Calu3 (cell line): ENCODE measurements at regions of chr3 and their contacts with region 1.

Region 1: DNA sequence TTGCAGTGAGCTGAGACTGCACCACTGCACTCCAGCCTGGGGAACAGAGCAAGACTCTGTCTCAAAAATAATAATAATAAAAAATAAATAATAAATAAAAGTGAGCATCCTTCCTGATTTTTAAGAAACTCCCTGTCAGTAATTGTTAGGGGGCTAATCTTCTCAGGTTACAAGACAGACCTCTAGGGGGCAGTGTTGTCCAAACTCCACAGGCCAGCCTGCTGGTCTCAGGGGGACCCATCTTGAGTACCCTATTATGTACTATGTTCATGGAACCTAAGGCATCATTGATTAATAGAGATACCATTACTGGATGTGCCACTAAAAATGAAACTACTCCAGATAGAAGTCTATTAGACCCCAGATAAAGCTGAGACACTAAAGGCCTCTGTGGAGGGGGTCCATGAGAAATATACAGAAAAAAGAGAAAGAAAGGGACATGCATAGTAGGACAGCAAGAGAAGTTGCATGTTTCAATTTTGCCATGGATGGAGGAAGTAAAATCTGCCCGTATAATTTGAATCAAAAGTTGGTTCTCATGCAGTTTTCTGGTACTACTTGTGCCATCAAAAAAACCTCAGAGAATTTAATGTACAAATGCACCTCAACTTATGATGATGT is 85.5 kb upstream of the CDV3 start:
- DNase-seq: peak; percentile 62
- H3K4me3 Mint-ChIP-seq: no peak overlapping the region
- H3K27ac Mint-ChIP-seq: no peak overlapping the region
- H3K4me1 Mint-ChIP-seq: peaks cover 19% of the 10 kb centered on the region
- H3K27me3 Mint-ChIP-seq: no peaks in the 10 kb centered on the region
- CTCF ChIP-seq: peak; percentile 61

Region 2: GRCh38 chr3:133525435-133525834 is 37.4 kb after region 1 on chr3:
- CTCF ChIA-PET with region 1: no interaction called
- intact Hi-C with region 1: loop called (anchors 2 kb)
- DNase-seq: no peak
- H3K4me3 Mint-ChIP-seq: no peak overlapping the region
- H3K27ac Mint-ChIP-seq: no peak overlapping the region
- H3K4me1 Mint-ChIP-seq: peaks cover 28% of the 10 kb centered on the region
- H3K27me3 Mint-ChIP-seq: no peaks in the 10 kb centered on the region
- CTCF ChIP-seq: no peak

Region 3: GRCh38 chr3:133701435-133702358 is 213.7 kb after region 1 on chr3:
- CTCF ChIA-PET with region 1: no interaction called
- intact Hi-C with region 1: no loop called
- DNase-seq: no peak
- H3K4me3 Mint-ChIP-seq: no peak overlapping the region
- H3K27ac Mint-ChIP-seq: no peak overlapping the region
- H3K4me1 Mint-ChIP-seq: no peaks in the 10 kb centered on the region
- H3K27me3 Mint-ChIP-seq: peaks cover 65% of the 10 kb centered on the region
- CTCF ChIP-seq: no peak